Calu3 (cell line): ENCODE measurements at regions of chr2 and their contacts with region 1.

Region 1: GRCh38 chr2:84631047-84631446 is 114.7 kb downstream of the DNAH6 start:
- DNase-seq: peak; percentile 25
- H3K4me3 Mint-ChIP-seq: no peak overlapping the region
- H3K27ac Mint-ChIP-seq: no peak overlapping the region
- H3K4me1 Mint-ChIP-seq: peaks cover 10% of the 10 kb centered on the region
- H3K27me3 Mint-ChIP-seq: peaks cover 20% of the 10 kb centered on the region
- CTCF ChIP-seq: peak; percentile 36

Region 2: GRCh38 chr2:84085562-84085961 is 545.5 kb before region 1 on chr2:
- CTCF ChIA-PET with region 1: no interaction called
- intact Hi-C with region 1: no loop called
- DNase-seq: no peak
- H3K4me3 Mint-ChIP-seq: no peak overlapping the region
- H3K27ac Mint-ChIP-seq: no peak overlapping the region
- H3K4me1 Mint-ChIP-seq: no peaks in the 10 kb centered on the region
- H3K27me3 Mint-ChIP-seq: no peaks in the 10 kb centered on the region
- CTCF ChIP-seq: no peak

Region 3: DNA sequence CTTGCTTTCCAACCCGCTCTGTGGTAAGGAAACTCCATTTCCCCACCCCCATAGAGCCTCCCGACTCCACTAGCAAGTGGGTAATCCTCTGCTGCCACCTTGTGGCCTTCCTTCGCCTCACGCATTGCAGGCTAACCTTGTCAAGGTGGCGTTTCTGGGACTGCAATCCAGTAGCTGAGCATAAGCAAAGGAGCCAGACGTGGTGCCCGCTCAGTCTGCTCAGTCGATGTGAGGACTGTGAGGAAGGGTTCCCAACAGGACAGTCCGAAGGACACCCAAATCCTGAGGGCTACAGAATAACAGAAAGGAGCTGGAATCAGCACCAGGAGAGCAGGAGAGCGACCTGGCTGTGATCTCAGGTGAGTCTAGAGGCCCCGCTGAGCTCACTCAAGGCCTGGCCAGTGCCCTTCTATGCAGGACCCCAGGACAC is 316.1 kb before region 1 on chr2:
- CTCF ChIA-PET with region 1: interaction called, 3 read pairs
- intact Hi-C with region 1: loop called (anchors 5 kb)
- DNase-seq: peak; percentile 89
- H3K4me3 Mint-ChIP-seq: no peak overlapping the region
- H3K27ac Mint-ChIP-seq: no peak overlapping the region
- H3K4me1 Mint-ChIP-seq: peaks cover 9% of the 10 kb centered on the region
- H3K27me3 Mint-ChIP-seq: peaks cover 28% of the 10 kb centered on the region
- CTCF ChIP-seq: peak; percentile 86

Region 4: DNA sequence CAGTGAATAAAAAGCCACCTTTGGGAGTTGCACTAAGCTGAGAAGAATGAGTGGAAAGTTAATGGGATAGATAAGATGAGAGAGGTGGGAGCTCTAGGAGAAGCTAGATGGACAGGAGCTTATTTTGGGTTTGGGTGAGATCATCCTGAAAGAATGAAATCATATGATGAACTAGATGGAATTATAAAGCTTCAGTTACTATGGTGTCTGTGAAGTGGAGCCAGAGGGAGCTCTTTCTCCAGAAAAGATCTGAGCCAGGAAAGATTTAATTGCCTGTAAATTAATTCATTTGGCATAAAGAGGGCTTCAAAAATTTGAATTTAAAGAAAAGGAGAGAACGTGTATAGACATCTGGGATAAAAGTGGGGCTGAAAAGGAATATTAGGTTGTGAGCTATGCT is 104.5 kb before region 1 on chr2:
- CTCF ChIA-PET with region 1: interaction called, 3 read pairs
- intact Hi-C with region 1: loop called (anchors 1 kb)
- DNase-seq: no peak
- H3K4me3 Mint-ChIP-seq: no peak overlapping the region
- H3K27ac Mint-ChIP-seq: no peak overlapping the region
- H3K4me1 Mint-ChIP-seq: peaks cover 6% of the 10 kb centered on the region
- H3K27me3 Mint-ChIP-seq: no peaks in the 10 kb centered on the region
- CTCF ChIP-seq: no peak

Region 5: GRCh38 chr2:84865181-84865783 is 234.2 kb after region 1 on chr2:
- CTCF ChIA-PET with region 1: no interaction called
- intact Hi-C with region 1: loop called (anchors 2 kb)
- DNase-seq: no peak
- H3K4me3 Mint-ChIP-seq: no peak overlapping the region
- H3K27ac Mint-ChIP-seq: no peak overlapping the region
- H3K4me1 Mint-ChIP-seq: no peaks in the 10 kb centered on the region
- H3K27me3 Mint-ChIP-seq: peaks cover 20% of the 10 kb centered on the region
- CTCF ChIP-seq: peak; percentile 48